MCF 10A (cell line): ENCODE measurements at regions of chr5 and their contacts with region 1.

Region 1: DNA sequence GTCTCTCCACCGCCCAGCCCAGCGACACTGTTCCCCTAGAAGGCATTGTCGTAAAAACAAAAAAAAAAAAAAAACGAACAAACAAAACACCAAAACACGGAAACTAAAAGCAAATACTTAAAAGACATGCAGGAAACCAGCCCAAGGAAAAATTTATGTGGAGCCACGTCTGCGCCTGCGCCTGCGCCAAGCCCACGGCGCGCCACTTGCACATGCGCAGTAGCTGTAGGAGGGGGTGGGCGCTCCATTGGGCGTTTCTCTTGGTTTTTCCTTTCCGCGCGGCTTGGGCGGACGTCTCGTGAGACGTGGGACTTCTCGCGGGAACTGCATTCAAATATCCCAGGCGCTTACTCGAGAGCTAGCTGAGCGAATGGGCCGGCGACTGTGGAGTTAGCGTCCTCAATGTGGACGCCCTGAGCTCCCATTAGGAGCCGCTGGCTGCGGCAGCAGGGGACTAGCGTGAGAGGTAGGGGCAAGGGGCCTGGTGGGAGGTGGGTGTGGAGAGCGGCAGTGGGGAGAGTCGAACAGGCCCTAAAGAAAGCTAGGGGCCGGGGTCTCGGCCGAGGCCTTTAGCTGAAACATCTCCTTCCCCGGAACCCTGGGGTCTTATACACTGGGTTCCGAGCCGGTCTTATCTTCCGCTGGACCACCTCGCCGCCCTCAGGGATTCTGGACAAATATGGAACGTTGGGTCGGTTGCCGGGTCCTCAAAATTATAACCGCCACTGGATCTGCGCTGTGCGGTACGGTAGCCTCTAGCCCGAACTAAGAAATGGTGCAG is at the start of gene SPDL1:
- DNase-seq: peak; percentile 98
- H3K4me3 Mint-ChIP-seq: peak within 1 kb of the TSS; percentile 97
- H3K27ac Mint-ChIP-seq: peak within 1 kb of the TSS; percentile 98
- H3K4me1 Mint-ChIP-seq: peaks cover 30% of the 10 kb centered on the region
- H3K27me3 Mint-ChIP-seq: no peaks in the 10 kb centered on the region
- CTCF ChIP-seq: no peak
- total RNA-seq, gene SPDL1: 40.6 and 51.3 TPM in 2 replicates

Region 2: DNA sequence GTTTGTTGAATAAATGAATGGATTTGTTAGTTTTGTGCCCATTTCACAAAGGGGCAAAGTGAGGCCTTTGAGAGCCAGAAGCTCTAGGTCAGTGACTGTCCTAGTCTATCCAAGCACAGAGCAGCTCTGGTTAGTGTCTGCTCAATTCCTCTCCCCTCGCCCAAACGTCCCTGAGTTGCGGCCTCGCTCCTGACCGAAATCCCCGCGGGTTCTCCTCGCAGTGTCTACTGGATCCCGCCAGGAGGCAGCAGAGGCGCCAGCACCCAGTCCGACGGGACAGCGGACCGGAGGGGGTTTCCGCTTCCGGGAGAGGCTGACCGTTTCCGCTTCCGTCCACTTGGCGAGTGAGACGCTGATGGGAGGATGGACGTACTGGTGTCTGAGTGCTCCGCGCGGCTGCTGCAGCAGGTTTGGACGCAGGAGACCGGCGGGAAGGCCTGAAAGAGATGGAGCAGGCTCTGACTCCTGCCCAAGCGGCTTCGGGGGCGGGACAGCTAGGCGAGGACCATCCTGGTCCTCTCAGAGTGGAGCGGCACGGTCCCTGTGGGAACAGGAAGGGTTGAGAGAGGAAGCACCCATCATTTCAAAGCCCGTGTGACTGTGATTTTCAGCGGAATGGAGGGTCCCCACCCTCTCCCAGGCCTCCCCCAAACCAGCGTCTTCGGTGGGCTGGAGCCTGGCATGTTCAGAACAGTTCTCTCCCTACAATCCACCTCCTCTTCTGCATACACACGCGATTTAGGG is 1097.3 kb before region 1 on chr5 and contains the start of gene RARS1:
- CTCF ChIA-PET with region 1: interaction called, 4 read pairs
- POLR2A ChIA-PET with region 1: no interaction called
- intact Hi-C with region 1: loop called (anchors 5 kb)
- DNase-seq: peak; percentile 96
- H3K4me3 Mint-ChIP-seq: peak within 1 kb of the TSS; percentile 95
- H3K27ac Mint-ChIP-seq: peak within 1 kb of the TSS; percentile 87
- H3K4me1 Mint-ChIP-seq: peaks cover 19% of the 10 kb centered on the region
- H3K27me3 Mint-ChIP-seq: no peaks in the 10 kb centered on the region
- CTCF ChIP-seq: peak; percentile 97
- total RNA-seq, gene RARS1: 120 and 127 TPM in 2 replicates

Region 3: GRCh38 chr5:168679515-168679920 is 904.1 kb before region 1 on chr5:
- CTCF ChIA-PET with region 1: interaction called, 15 read pairs
- POLR2A ChIA-PET with region 1: no interaction called
- intact Hi-C with region 1: loop called (anchors 1 kb)
- DNase-seq: peak; percentile 84
- H3K4me3 Mint-ChIP-seq: no peak overlapping the region
- H3K27ac Mint-ChIP-seq: no peak overlapping the region
- H3K4me1 Mint-ChIP-seq: no peaks in the 10 kb centered on the region
- H3K27me3 Mint-ChIP-seq: no peaks in the 10 kb centered on the region
- CTCF ChIP-seq: peak; percentile 96

Region 4: GRCh38 chr5:168947212-168947868 is 636.3 kb before region 1 on chr5:
- CTCF ChIA-PET with region 1: interaction called, 9 read pairs
- POLR2A ChIA-PET with region 1: no interaction called
- intact Hi-C with region 1: loop called (anchors 1 kb)
- DNase-seq: peak; percentile 77
- H3K4me3 Mint-ChIP-seq: no peak overlapping the region
- H3K27ac Mint-ChIP-seq: no peak overlapping the region
- H3K4me1 Mint-ChIP-seq: no peaks in the 10 kb centered on the region
- H3K27me3 Mint-ChIP-seq: no peaks in the 10 kb centered on the region
- CTCF ChIP-seq: peak; percentile 83

Region 5: GRCh38 chr5:169302491-169303118 is 281.0 kb before region 1 on chr5:
- CTCF ChIA-PET with region 1: interaction called, 14 read pairs
- POLR2A ChIA-PET with region 1: no interaction called
- intact Hi-C with region 1: loop called (anchors 1 kb)
- DNase-seq: peak; percentile 86
- H3K4me3 Mint-ChIP-seq: peak overlapping the region; percentile 74
- H3K27ac Mint-ChIP-seq: no peak overlapping the region
- H3K4me1 Mint-ChIP-seq: peaks cover 19% of the 10 kb centered on the region
- H3K27me3 Mint-ChIP-seq: no peaks in the 10 kb centered on the region
- CTCF ChIP-seq: peak; percentile 95

Region 6: DNA sequence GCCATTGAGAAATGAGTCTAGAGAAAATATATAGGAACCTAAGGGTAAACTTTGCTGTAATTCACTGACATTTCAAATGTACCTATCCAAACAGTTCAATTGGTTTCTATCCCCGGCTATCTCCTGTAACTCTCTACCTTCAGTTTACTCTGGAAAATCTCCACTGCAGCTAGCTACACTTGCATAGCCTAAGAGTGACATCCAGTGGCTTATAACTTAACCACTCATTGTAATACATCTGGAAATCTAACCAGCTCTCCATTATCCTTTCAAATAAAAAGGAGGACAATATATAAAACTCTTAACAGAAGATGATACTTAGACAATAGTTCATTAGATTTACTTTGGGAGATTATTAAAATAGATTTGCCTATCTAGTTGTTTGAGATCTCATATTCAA is 35.3 kb before region 1 on chr5:
- CTCF ChIA-PET with region 1: interaction called, 17 read pairs
- POLR2A ChIA-PET with region 1: no interaction called
- intact Hi-C with region 1: loop called (anchors 1 kb)
- DNase-seq: peak; percentile 55
- H3K4me3 Mint-ChIP-seq: no peak overlapping the region
- H3K27ac Mint-ChIP-seq: no peak overlapping the region
- H3K4me1 Mint-ChIP-seq: no peaks in the 10 kb centered on the region
- H3K27me3 Mint-ChIP-seq: peaks cover 30% of the 10 kb centered on the region
- CTCF ChIP-seq: peak; percentile 78

Region 7: GRCh38 chr5:169595172-169595820 is 11.7 kb after region 1 on chr5:
- CTCF ChIA-PET with region 1: interaction called, 6 read pairs
- POLR2A ChIA-PET with region 1: interaction called, 14 read pairs
- intact Hi-C with region 1: no loop called
- DNase-seq: no peak
- H3K4me3 Mint-ChIP-seq: no peak overlapping the region
- H3K27ac Mint-ChIP-seq: no peak overlapping the region
- H3K4me1 Mint-ChIP-seq: peaks cover 15% of the 10 kb centered on the region
- H3K27me3 Mint-ChIP-seq: no peaks in the 10 kb centered on the region
- CTCF ChIP-seq: no peak